CD4-positive, alpha-beta memory T cell (primary cell): ENCODE measurements at regions of chr4 and their contacts with region 1.

Region 1: GRCh38 chr4:67651536-67651935 is 49.4 kb downstream of the UBA6 start:
- DNase-seq: no peak
- H3K4me3 ChIP-seq: no peak overlapping the region
- H3K4me3 Mint-ChIP-seq: no peak overlapping the region
- H3K27ac ChIP-seq: no peak overlapping the region
- H3K27ac Mint-ChIP-seq: no peak overlapping the region
- H3K4me1 ChIP-seq: no peaks in the 10 kb centered on the region
- H3K4me1 Mint-ChIP-seq: peaks cover 0 to 7% (median 4%) of the 10 kb centered on the region in 4 donors
- H3K27me3 ChIP-seq: no peaks in the 10 kb centered on the region
- H3K27me3 Mint-ChIP-seq: no peaks in the 10 kb centered on the region

Region 2: GRCh38 chr4:67684839-67685531 is 33.4 kb after region 1 on chr4:
- CTCF ChIA-PET with region 1: no interaction called
- POLR2A ChIA-PET with region 1: no interaction called
- intact Hi-C with region 1: loop called (anchors 5 kb)
- DNase-seq: no peak
- H3K4me3 ChIP-seq: no peak overlapping the region
- H3K4me3 Mint-ChIP-seq: no peak overlapping the region
- H3K27ac ChIP-seq: no peak overlapping the region
- H3K27ac Mint-ChIP-seq: peak overlapping the region in 4 of 7 donors; percentile 31 to 39 (median 34)
- H3K4me1 ChIP-seq: peaks cover 12% of the 10 kb centered on the region
- H3K4me1 Mint-ChIP-seq: peaks cover 20 to 32% (median 26%) of the 10 kb centered on the region in 4 donors
- H3K27me3 ChIP-seq: no peaks in the 10 kb centered on the region
- H3K27me3 Mint-ChIP-seq: no peaks in the 10 kb centered on the region